IMR-90 (cell line): ENCODE measurements at regions of chr12 and their contacts with region 1.

Region 1: DNA sequence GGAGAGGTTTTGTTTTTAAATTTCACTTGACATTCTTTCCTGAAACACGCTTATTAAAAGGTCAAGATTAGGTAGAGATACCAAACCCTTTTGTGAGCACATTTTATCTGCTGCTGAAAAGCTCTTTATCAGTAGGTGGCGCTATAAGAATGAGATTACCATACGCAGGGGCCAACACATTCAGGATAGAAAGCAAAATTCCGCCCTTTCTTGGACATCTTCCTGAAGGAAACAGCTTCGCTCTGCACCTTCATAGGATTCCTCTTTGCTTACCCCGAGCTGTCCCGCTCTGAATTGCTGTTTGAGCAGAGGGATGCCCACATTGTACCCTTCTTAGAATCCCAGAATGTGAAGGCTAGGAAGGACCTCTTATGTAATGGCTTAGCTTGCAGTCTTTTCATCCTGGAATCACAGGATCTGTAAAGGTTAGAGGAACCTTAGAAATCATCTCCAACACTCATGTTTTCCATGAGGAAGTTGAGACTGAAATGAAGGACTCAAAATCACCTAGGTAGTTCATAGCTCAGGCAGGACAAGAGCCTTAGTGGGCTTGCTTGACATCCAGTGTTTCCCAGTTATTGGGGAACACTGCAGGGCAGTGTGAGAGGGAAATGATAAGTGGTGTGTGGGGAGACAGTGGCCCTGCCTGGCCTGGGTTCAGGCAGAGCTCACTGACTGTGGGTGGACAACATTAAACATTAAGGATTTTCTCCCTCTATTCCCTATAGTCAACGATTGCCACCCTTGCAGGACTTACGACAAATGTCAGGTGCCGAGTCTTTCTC is 38.7 kb upstream of the CRY1 start:
- DNase-seq: peak; percentile 68
- ATAC-seq: peak; percentile 94
- H3K4me3 ChIP-seq: no peak overlapping the region
- H3K27ac ChIP-seq: no peak overlapping the region
- H3K4me1 ChIP-seq: no peaks in the 10 kb centered on the region
- H3K27me3 ChIP-seq: no peaks in the 10 kb centered on the region
- CTCF ChIP-seq: peak; percentile 97
- POLR2A ChIP-seq: no peak
- RAD21 ChIP-seq: peak; percentile 97

Region 2: GRCh38 chr12:107179871-107180270 is 47.8 kb after region 1 on chr12:
- CTCF ChIA-PET with region 1: no interaction called
- POLR2A ChIA-PET with region 1: no interaction called
- dilution Hi-C with region 1: no loop called
- in situ Hi-C with region 1: no loop called
- intact Hi-C with region 1: no loop called
- DNase-seq: no peak
- ATAC-seq: no peak
- H3K4me3 ChIP-seq: no peak overlapping the region
- H3K27ac ChIP-seq: no peak overlapping the region
- H3K4me1 ChIP-seq: no peaks in the 10 kb centered on the region
- H3K27me3 ChIP-seq: peaks cover 7% of the 10 kb centered on the region; the same call in 1 of the 2 replicates
- CTCF ChIP-seq: no peak
- POLR2A ChIP-seq: no peak
- RAD21 ChIP-seq: no peak

Region 3: GRCh38 chr12:107317751-107318613 is 186.0 kb after region 1 on chr12:
- CTCF ChIA-PET with region 1: interaction called, 4 read pairs
- POLR2A ChIA-PET with region 1: no interaction called
- dilution Hi-C with region 1: no loop called
- in situ Hi-C with region 1: loop called (anchors 10 kb)
- intact Hi-C with region 1: loop called (anchors 2 kb)
- DNase-seq: peak; percentile 88
- ATAC-seq: peak; percentile 94
- H3K4me3 ChIP-seq: peak overlapping the region; percentile 48
- H3K27ac ChIP-seq: no peak overlapping the region; the same call in 1 of the 2 replicates
- H3K4me1 ChIP-seq: no peaks in the 10 kb centered on the region; the same call in 1 of the 2 replicates
- H3K27me3 ChIP-seq: peaks cover 19% of the 10 kb centered on the region
- CTCF ChIP-seq: no peak
- POLR2A ChIP-seq: no peak
- RAD21 ChIP-seq: 0 out of 2 replicates have a peak, but pooled peaks have one; percentile 6

Region 4: DNA sequence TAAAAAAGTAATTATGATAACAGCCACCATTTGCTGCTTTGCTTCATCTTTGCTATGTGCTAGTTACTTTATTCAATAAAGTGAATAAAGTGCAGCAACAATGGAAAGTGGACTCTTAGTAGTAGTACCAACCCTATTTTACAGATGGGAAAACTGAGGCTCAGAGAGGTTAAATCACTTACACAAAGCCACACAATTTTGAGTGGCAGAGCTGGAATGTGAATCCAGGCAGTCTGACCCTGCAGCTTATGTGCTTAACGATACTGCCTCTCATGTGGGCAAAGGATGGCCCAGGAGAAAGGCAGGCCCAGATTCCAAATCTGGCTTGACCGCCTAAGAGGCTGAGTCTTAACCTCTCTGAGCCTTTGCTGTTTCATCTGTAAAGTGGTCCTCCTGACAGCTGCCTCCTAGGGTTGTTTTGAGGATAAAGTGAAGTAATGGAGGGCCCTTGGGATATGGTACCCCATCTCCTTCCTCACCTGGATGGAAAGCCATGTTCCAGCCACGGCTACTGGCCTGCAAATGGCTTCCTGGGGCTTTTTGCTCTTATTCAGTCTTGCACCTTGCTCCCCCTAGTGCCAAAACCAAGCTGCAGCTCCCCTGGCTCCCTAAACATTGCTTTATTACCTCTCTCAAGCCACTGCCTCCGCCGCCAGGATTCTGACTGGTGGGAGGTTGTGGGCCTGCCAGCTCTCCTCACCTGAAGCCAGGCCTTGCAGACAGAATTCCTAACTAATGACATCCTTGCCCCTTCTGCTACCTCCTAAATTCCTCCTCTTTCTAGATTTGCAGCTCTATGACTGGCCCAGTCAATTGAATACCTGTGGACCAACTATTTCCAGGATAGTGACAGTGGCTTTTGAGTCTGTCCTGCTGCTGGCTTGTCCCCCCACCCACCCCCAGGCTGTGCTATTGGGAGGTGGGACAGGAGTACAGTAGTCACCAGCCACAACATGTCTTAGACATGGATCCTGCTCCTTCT is 270.3 kb after region 1 on chr12:
- CTCF ChIA-PET with region 1: interaction called, 20 read pairs
- POLR2A ChIA-PET with region 1: no interaction called
- dilution Hi-C with region 1: no loop called
- in situ Hi-C with region 1: loop called (anchors 5 kb)
- intact Hi-C with region 1: loop called (anchors 1 kb)
- DNase-seq: peak; percentile 62
- ATAC-seq: peak; percentile 66; the same call in 1 of the 2 replicates
- H3K4me3 ChIP-seq: no peak overlapping the region
- H3K27ac ChIP-seq: no peak overlapping the region
- H3K4me1 ChIP-seq: peaks cover 6% of the 10 kb centered on the region
- H3K27me3 ChIP-seq: no peaks in the 10 kb centered on the region
- CTCF ChIP-seq: peak; percentile 72
- POLR2A ChIP-seq: no peak
- RAD21 ChIP-seq: peak; percentile 77

Region 5: DNA sequence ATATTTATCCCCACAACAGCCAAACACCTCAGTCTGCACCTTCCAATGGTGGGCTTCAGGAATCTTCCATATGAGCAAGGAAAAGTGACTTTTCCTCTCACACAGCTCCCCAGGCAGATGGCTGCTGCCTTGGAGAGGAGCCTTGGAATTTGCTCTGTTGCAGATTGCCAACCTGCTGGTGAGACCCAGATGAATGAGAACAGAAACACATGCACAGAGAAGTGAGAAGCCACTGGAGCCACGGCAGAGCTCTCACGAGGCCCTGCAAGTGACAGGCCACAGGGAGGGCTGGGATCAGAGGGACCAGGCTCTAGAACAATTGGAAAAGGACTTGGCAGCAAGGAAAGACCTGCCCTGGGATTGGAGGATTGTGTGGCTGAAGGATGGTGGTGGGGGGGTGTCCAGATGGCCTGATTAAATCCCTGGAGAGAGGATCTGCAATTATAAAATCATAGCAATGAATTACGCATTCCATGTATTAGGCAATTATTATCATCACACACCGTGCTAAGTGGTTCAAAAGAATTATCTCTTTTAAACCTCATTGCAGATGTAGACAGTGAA is 468.6 kb after region 1 on chr12:
- CTCF ChIA-PET with region 1: interaction called, 85 read pairs
- POLR2A ChIA-PET with region 1: no interaction called
- dilution Hi-C with region 1: no loop called
- in situ Hi-C with region 1: loop called (anchors 5 kb)
- intact Hi-C with region 1: no loop called
- DNase-seq: no peak
- ATAC-seq: no peak
- H3K4me3 ChIP-seq: no peak overlapping the region
- H3K27ac ChIP-seq: no peak overlapping the region
- H3K4me1 ChIP-seq: no peaks in the 10 kb centered on the region
- H3K27me3 ChIP-seq: no peaks in the 10 kb centered on the region
- CTCF ChIP-seq: no peak
- POLR2A ChIP-seq: no peak
- RAD21 ChIP-seq: no peak

Region 6: DNA sequence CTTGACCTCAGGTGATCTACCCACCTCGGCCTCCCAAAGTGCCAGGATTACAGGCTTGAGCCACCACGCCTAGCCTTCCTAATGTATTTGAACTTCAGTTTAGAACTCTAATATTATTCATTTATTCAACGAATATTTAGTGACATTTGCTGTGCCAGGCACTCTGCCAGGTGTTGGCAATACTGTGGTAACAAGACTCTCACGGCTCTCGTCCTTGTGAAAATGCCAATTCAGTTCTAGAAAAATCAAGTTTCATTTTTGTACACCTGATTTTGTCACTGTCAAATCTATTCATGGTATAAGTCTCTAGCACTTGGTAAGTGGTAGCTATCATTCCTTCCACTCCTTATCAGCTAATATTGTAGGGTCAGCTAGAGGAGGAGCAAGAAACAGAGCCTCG is 547.3 kb after region 1 on chr12:
- CTCF ChIA-PET with region 1: no interaction called
- POLR2A ChIA-PET with region 1: no interaction called
- dilution Hi-C with region 1: no loop called
- in situ Hi-C with region 1: no loop called
- intact Hi-C with region 1: loop called (anchors 5 kb)
- DNase-seq: no peak
- ATAC-seq: no peak
- H3K4me3 ChIP-seq: no peak overlapping the region
- H3K27ac ChIP-seq: no peak overlapping the region
- H3K4me1 ChIP-seq: no peaks in the 10 kb centered on the region
- H3K27me3 ChIP-seq: peaks cover 30% of the 10 kb centered on the region
- CTCF ChIP-seq: no peak
- POLR2A ChIP-seq: no peak
- RAD21 ChIP-seq: no peak

Region 7: DNA sequence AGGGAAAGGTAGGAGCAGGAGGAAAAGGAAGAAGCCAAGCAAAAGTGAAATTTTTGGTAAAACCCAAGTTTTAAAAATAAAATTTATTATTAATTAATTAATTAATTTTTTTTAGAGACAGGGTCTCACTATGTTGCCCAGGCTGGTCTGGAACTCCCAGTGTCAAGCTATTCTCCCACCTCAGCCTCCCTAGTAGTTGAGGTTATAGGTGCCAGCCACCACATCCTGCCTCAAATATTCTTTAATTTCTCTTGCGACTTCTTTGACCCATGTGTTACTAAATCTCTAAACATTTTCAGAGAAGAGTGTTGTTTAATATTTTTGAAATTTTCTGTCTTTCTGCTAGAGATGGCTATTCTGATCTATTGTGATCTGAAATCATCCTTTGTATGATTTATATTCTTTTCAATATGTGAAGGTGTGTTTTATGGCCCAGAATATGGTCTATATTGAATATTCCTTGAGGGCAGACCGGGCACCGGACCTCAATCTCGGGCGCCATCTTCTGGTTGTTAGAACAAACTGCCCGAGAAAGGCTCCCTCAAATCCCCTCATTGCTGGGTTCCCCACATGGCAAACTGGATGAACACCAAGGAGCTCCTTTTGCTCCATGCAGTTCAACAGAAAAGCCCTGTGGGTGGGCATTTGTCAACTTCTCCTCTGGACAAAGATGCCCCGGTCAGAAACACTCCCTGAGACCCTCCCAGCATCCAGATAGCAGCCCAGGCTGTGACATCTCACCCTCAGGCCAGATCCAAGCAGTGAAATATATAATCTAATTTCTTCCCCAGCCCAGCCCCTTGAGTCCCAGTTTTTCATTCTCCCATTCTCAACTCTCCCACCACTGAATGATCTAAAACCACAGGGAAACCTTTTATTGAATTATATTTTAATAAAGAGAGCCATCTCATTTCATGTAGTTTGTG is 753.0 kb after region 1 on chr12:
- CTCF ChIA-PET with region 1: no interaction called
- POLR2A ChIA-PET with region 1: no interaction called
- dilution Hi-C with region 1: no loop called
- in situ Hi-C with region 1: loop called (anchors 25 kb)
- intact Hi-C with region 1: loop called (anchors 2 kb)
- DNase-seq: peak; percentile 49
- ATAC-seq: peak; percentile 93
- H3K4me3 ChIP-seq: no peak overlapping the region
- H3K27ac ChIP-seq: no peak overlapping the region
- H3K4me1 ChIP-seq: no peaks in the 10 kb centered on the region
- H3K27me3 ChIP-seq: no peaks in the 10 kb centered on the region
- CTCF ChIP-seq: peak; percentile 84
- POLR2A ChIP-seq: 0 out of 2 replicates have a peak, but pooled peaks have one; percentile 30
- RAD21 ChIP-seq: peak; percentile 81